PC-9 (cell line): ENCODE measurements at regions of chr12 and their contacts with region 1.

Region 1: GRCh38 chr12:131441060-131441396 is 269.9 kb upstream of the SFSWAP start:
- DNase-seq: no peak
- H3K4me3 ChIP-seq: no peak overlapping the region
- H3K27ac ChIP-seq: no peak overlapping the region
- H3K4me1 ChIP-seq: no peaks in the 10 kb centered on the region
- H3K27me3 ChIP-seq: peaks cover 80% of the 10 kb centered on the region
- CTCF ChIP-seq: no peak

Region 2: GRCh38 chr12:131177599-131177998 is 263.4 kb before region 1 on chr12:
- CTCF ChIA-PET with region 1: no interaction called
- POLR2A ChIA-PET with region 1: no interaction called
- intact Hi-C with region 1: no loop called
- DNase-seq: no peak
- H3K4me3 ChIP-seq: no peak overlapping the region
- H3K27ac ChIP-seq: no peak overlapping the region
- H3K4me1 ChIP-seq: no peaks in the 10 kb centered on the region
- H3K27me3 ChIP-seq: no peaks in the 10 kb centered on the region; the same call in 1 of the 2 replicates
- CTCF ChIP-seq: no peak

Region 3: GRCh38 chr12:131222256-131223139 is 218.5 kb before region 1 on chr12:
- CTCF ChIA-PET with region 1: no interaction called
- POLR2A ChIA-PET with region 1: no interaction called
- intact Hi-C with region 1: loop called (anchors 5 kb)
- DNase-seq: no peak
- H3K4me3 ChIP-seq: no peak overlapping the region
- H3K27ac ChIP-seq: no peak overlapping the region
- H3K4me1 ChIP-seq: no peaks in the 10 kb centered on the region
- H3K27me3 ChIP-seq: peaks cover 42% of the 10 kb centered on the region
- CTCF ChIP-seq: no peak

Region 4: GRCh38 chr12:131250028-131250950 is 190.7 kb before region 1 on chr12:
- CTCF ChIA-PET with region 1: no interaction called
- POLR2A ChIA-PET with region 1: no interaction called
- intact Hi-C with region 1: no loop called
- DNase-seq: no peak
- H3K4me3 ChIP-seq: no peak overlapping the region
- H3K27ac ChIP-seq: no peak overlapping the region
- H3K4me1 ChIP-seq: no peaks in the 10 kb centered on the region
- H3K27me3 ChIP-seq: peaks cover 34% of the 10 kb centered on the region
- CTCF ChIP-seq: no peak